B cell (primary cell): ENCODE measurements at regions of chr15 and their contacts with region 1.

Region 1: GRCh38 chr15:84929744-84930371 is 45.4 kb downstream of the SLC28A1 start:
- DNase-seq: no peak
- ATAC-seq: no peak
- H3K4me3 ChIP-seq: no peak overlapping the region
- H3K4me3 Mint-ChIP-seq: no peak overlapping the region
- H3K27ac ChIP-seq: no peak overlapping the region
- H3K27ac Mint-ChIP-seq: no peak overlapping the region
- H3K4me1 ChIP-seq: peaks cover 2 to 5% of the 10 kb centered on the region in 2 donors
- H3K4me1 Mint-ChIP-seq: peaks cover 5% of the 10 kb centered on the region
- H3K27me3 ChIP-seq: no peaks in the 10 kb centered on the region
- H3K27me3 Mint-ChIP-seq: no peaks in the 10 kb centered on the region
- CTCF ChIP-seq: no peak

Region 2: GRCh38 chr15:84570164-84570735 is 359.6 kb before region 1 on chr15:
- CTCF ChIA-PET with region 1: interaction called, 5 read pairs
- POLR2A ChIA-PET with region 1: no interaction called
- intact Hi-C with region 1: loop called (anchors 5 kb)
- DNase-seq: peak; percentile 66
- ATAC-seq: peak; percentile 43
- H3K4me3 ChIP-seq: peak overlapping the region; percentile 30 to 87 (median 75)
- H3K4me3 Mint-ChIP-seq: peak overlapping the region; percentile 93
- H3K27ac ChIP-seq: peak overlapping the region; percentile 34 to 59
- H3K27ac Mint-ChIP-seq: peak overlapping the region; percentile 90
- H3K4me1 ChIP-seq: peaks cover 0 to 12% of the 10 kb centered on the region in 2 donors
- H3K4me1 Mint-ChIP-seq: peaks cover 4% of the 10 kb centered on the region
- H3K27me3 ChIP-seq: no peaks in the 10 kb centered on the region
- H3K27me3 Mint-ChIP-seq: no peaks in the 10 kb centered on the region
- CTCF ChIP-seq: no peak

Region 3: DNA sequence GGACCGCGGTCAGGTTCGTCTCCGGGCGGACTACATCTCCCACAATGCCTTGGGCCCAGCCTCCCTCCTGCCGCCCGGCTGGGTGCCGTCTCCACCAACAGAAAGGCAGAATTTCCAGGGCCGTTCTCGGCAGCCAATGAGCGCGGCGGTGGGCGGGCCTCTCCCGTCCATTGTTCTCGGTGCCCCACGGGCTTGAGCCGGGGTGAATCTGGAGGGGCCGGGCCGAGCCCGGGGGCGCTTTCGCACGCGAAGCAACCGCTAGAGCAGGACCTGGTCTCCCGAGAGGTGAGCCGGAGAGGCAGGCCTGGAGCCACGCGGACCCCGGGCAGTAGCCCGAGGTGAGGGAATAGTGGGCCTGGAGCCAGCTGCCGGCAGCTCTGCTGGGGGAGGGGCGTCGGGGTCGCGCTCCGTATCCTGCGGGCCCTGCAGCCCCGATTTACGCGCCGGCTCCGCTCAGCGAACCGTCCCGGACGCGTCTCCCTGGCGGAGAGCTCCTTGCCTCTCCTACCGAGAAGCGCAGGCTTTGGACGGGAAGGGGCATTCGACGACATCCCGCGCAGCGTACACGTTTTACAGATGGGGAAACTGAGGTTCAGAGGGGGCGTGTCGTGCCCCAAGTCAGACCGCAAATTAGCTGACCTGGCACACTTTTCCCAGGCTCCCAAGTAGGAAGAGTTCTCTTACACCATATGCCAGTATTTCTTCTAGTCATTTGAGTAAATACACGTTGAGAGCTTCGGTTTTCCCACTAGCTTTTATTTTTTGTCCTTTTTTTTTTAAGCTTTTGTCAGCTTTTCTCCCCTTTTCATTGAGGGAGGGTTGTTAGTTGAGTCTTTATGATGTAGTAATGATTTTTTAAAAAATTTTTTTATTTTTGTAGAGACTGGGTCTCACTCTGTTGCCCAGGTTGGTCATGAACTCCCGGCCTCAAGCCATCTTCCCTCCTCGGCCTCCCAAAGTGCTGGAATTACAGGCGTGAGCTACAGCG is 328.7 kb before region 1 on chr15 and contains the start of gene ZSCAN2:
- CTCF ChIA-PET with region 1: interaction called, 11 read pairs
- POLR2A ChIA-PET with region 1: no interaction called
- intact Hi-C with region 1: no loop called
- DNase-seq: peak; percentile 93
- ATAC-seq: peak; percentile 94
- H3K4me3 ChIP-seq: peak within 1 kb of the TSS; percentile 78 to 95 (median 86)
- H3K4me3 Mint-ChIP-seq: peak within 1 kb of the TSS; percentile 99
- H3K27ac ChIP-seq: peak within 1 kb of the TSS; percentile 32 to 47
- H3K27ac Mint-ChIP-seq: peak within 1 kb of the TSS; percentile 96
- H3K4me1 ChIP-seq: peaks cover 29 to 52% of the 10 kb centered on the region in 2 donors
- H3K4me1 Mint-ChIP-seq: peaks cover 64% of the 10 kb centered on the region
- H3K27me3 ChIP-seq: no peaks in the 10 kb centered on the region
- H3K27me3 Mint-ChIP-seq: no peaks in the 10 kb centered on the region
- CTCF ChIP-seq: no peak
- total RNA-seq, gene ZSCAN2: 16.2 and 18.6 TPM in 2 replicates

Region 4: DNA sequence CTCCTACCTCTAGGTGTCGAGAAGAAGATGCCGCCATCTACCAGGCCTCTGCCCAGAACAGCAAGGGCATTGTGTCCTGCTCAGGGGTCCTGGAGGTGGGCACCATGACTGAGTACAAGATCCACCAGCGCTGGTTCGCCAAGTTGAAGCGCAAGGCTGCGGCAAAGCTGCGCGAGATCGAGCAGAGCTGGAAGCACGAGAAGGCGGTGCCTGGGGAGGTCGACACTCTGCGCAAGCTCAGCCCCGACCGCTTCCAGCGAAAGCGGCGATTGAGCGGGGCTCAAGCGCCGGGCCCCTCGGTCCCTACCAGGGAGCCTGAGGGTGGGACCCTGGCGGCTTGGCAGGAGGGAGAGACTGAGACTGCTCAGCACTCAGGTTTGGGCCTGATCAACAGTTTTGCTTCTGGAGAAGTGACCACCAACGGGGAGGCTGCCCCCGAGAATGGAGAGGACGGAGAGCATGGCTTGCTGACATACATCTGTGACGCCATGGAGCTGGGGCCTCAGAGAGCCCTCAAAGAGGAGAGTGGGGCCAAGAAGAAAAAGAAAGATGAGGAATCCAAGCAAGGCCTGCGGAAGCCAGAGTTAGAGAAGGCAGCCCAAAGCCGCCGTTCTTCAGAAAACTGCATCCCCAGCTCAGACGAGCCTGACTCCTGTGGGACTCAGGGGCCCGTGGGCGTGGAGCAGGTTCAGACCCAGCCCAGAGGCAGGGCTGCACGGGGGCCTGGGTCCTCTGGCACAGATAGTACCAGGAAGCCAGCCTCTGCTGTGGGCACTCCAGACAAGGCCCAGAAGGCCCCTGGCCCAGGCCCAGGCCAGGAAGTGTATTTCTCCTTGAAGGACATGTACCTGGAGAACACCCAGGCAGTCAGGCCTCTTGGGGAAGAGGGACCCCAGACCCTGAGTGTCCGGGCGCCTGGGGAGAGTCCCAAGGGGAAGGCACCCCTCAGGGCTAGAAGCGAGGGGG is 89.9 kb before region 1 on chr15:
- CTCF ChIA-PET with region 1: interaction called, 4 read pairs
- POLR2A ChIA-PET with region 1: no interaction called
- intact Hi-C with region 1: loop called (anchors 5 kb)
- DNase-seq: no peak
- ATAC-seq: no peak
- H3K4me3 ChIP-seq: no peak overlapping the region
- H3K4me3 Mint-ChIP-seq: no peak overlapping the region
- H3K27ac ChIP-seq: no peak overlapping the region
- H3K27ac Mint-ChIP-seq: no peak overlapping the region
- H3K4me1 ChIP-seq: no peaks in the 10 kb centered on the region
- H3K4me1 Mint-ChIP-seq: no peaks in the 10 kb centered on the region
- H3K27me3 ChIP-seq: no peaks in the 10 kb centered on the region
- H3K27me3 Mint-ChIP-seq: peaks cover 24% of the 10 kb centered on the region
- CTCF ChIP-seq: no peak

Region 5: GRCh38 chr15:85044251-85044853 is 114.5 kb after region 1 on chr15:
- CTCF ChIA-PET with region 1: interaction called, 11 read pairs
- POLR2A ChIA-PET with region 1: no interaction called
- intact Hi-C with region 1: no loop called
- DNase-seq: peak; percentile 71
- ATAC-seq: peak; percentile 49
- H3K4me3 ChIP-seq: no peak overlapping the region
- H3K4me3 Mint-ChIP-seq: no peak overlapping the region
- H3K27ac ChIP-seq: no peak overlapping the region
- H3K27ac Mint-ChIP-seq: no peak overlapping the region
- H3K4me1 ChIP-seq: peaks cover 3 to 9% of the 10 kb centered on the region in 2 donors
- H3K4me1 Mint-ChIP-seq: peaks cover 32% of the 10 kb centered on the region
- H3K27me3 ChIP-seq: no peaks in the 10 kb centered on the region
- H3K27me3 Mint-ChIP-seq: no peaks in the 10 kb centered on the region
- CTCF ChIP-seq: peak; percentile 67